HEK293 (cell line): ENCODE measurements at regions of chr11 and their contacts with region 1.

Region 1: GRCh38 chr11:8682303-8683114 is at the starts of genes RPL27A and TRIM66:
- H3K4me3 ChIP-seq: peak within 1 kb of the TSS; percentile 94
- H3K27ac ChIP-seq: peak within 1 kb of the TSS; percentile 84
- H3K4me1 ChIP-seq: no peaks in the 10 kb centered on the region
- CTCF ChIP-seq: no peak

Region 2: GRCh38 chr11:8225589-8226036 is 456.9 kb before region 1 on chr11:
- CTCF ChIA-PET with region 1: no interaction called
- POLR2A ChIA-PET with region 1: no interaction called
- H3K4me3 ChIP-seq: no peak overlapping the region
- H3K27ac ChIP-seq: no peak overlapping the region
- H3K4me1 ChIP-seq: peaks cover 2% of the 10 kb centered on the region; the same call in 1 of the 2 replicates
- CTCF ChIP-seq: peak; percentile 71; the same call in 1 of the 2 replicates

Region 3: DNA sequence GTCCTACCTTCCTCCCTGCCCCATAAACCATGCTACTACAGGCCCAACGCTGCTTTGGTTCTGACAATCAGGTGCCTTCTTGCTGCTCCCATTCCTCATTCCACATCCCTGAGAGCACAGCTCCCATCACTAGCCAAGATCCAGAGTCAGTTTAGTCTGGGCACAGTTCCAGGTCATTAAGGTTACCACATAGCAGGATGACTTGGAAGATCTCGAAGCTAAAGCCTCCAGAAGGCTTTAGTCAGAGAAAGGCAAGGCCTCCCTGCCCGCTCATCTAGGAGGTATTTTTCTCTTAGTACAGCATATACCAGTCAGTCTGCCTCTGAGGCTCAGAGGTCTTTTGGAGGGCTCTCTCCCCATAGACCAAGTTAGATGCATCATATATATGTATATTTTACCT is 30.4 kb before region 1 on chr11:
- CTCF ChIA-PET with region 1: no interaction called
- POLR2A ChIA-PET with region 1: no interaction called
- H3K4me3 ChIP-seq: no peak overlapping the region
- H3K27ac ChIP-seq: no peak overlapping the region
- H3K4me1 ChIP-seq: no peaks in the 10 kb centered on the region
- CTCF ChIP-seq: no peak

Region 4: DNA sequence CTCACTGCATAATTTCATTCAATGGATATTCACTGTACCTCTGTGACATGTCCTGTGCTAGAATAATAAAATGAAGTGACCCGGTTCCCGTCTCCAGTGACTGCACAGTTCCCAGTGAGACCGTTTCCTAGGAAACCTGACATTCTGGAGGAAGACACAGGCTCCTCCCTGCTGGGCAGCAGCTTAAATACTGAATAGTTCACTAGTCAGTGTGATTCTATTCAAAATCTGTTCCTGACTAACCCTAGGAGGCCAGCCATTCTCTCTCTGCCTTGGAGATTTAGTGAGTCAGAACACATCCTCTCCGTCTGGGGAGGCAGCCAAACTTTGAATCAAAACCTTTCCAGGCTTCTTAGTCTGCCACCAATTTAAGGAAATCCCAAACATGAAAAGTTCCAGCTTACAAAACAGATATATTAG is 11.3 kb before region 1 on chr11:
- CTCF ChIA-PET with region 1: interaction called, 3 read pairs
- POLR2A ChIA-PET with region 1: interaction called, 11 read pairs
- H3K4me3 ChIP-seq: no peak overlapping the region
- H3K27ac ChIP-seq: no peak overlapping the region
- H3K4me1 ChIP-seq: 0 out of 2 replicates have a peak, but pooled peaks cover 3% of the 10 kb centered on the region
- CTCF ChIP-seq: no peak

Region 5: DNA sequence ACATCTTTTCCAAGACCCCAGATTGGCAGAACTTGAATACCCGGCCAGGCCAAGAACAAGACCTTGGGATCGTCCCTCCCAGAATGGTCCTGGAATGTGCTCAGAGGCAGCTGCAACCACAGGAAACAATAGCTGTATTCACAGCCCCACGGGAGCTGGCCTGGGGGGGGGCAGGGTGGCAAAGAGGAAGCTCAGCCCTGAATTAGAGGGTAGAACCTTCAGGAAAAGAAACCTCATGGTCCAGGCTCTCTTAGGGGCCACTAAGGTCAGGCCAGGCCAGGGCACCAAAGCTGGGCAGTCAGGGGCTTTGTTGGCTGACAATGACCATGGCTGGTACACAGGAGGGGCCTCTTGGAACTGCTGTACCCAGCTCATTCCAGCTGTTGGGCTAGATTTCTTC is 17.4 kb after region 1 on chr11:
- CTCF ChIA-PET with region 1: no interaction called
- POLR2A ChIA-PET with region 1: no interaction called
- H3K4me3 ChIP-seq: no peak overlapping the region
- H3K27ac ChIP-seq: no peak overlapping the region
- H3K4me1 ChIP-seq: no peaks in the 10 kb centered on the region
- CTCF ChIP-seq: no peak